ENCODE measurements at regions of chr17 and their contacts with region 1.

Region 1: DNA sequence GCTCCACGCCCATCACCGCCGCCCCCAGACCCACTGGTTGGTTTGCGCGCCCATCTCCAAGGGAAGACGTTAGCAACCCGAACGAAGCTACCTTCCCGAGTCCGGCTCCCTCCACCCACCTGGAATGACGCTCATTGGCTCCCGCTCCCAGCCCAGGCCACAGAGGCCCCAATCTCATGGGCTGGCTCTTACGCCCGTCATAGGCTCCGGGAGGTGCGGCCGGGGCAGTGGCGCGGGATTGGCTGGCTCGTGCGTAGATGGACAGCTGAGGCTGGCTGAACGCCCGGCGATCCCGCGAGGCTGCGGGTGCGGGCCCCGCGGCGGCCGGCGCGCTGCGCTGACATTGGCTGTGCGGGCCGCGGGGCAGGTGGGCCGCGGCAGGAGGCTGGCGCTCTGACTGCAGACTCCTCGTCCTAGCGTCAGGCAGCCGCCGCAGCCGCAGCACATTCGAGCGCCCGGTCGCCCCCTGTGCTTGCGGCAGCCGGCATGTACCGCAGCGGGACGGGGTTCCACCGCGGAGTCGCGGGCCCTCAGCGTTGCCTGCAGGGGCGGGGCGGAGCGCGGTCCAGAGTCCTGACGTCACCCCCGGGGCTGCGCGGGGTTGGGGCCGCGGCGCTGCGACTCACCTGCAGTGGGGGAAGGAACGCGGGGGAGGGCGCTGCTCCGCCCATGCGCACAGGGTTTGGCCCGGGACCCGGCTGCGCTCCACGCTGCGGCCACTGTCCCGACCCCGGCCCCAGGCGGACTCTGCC is 453 bp upstream of the MYH10 start:
- DNase-seq: peak; percentile 99

Region 2: GRCh38 chr17:7931709-7932482 is 699.1 kb before region 1 on chr17 and contains the starts of genes CNTROB and TRAPPC1:
- intact Hi-C with region 1: loop called in 1 of 2 experiments (anchors 10 kb)
- DNase-seq: peak; percentile 100
- total RNA-seq, gene CNTROB: 14.7 to 15.2 TPM
- total RNA-seq, gene TRAPPC1: 53.7 to 72.7 TPM

Region 3: DNA sequence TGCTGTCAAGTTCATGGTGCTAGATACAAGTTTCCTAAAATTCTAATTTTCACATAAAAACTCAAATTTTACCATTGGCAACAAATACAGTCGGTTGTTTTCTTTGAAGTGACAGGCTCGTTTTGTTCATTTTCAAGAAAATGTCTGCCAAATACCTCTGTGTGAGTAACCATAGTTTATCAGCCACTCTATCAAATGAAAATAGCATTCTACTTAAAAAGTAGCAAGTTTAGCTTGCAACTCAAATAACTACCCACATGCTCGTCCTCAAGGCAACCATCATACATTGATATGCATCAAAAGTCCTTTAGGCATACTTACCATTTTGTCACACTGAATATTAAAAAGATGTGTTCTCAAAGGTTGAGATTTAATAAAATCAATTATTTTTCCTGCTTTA is 12.2 kb before region 1 on chr17:
- intact Hi-C with region 1: loop called in 1 of 2 experiments (anchors 2 kb)
- DNase-seq: no peak

Region 4: GRCh38 chr17:8745586-8746500 is 114.9 kb after region 1 on chr17:
- intact Hi-C with region 1: loop called in 1 of 2 experiments (anchors 10 kb)
- DNase-seq: peak; percentile 92